Endothelial cell of umbilical vein (primary cell): ENCODE measurements at regions of chr11 and their contacts with region 1.

Region 1: GRCh38 chr11:13354335-13354734 is 76.7 kb downstream of the BMAL1 start:
- DNase-seq: peak; percentile 44
- H3K4me3 ChIP-seq: no peak overlapping the region
- H3K27ac ChIP-seq: no peak overlapping the region
- H3K4me1 ChIP-seq: no peaks in the 10 kb centered on the region
- H3K27me3 ChIP-seq: no peaks in the 10 kb centered on the region
- CTCF ChIP-seq: peak; percentile 45 to 46
- POLR2A ChIP-seq: no peak

Region 2: GRCh38 chr11:13269775-13270174 is 84.6 kb before region 1 on chr11:
- CTCF ChIA-PET with region 1: no interaction called
- POLR2A ChIA-PET with region 1: no interaction called
- dilution Hi-C with region 1: no loop called
- intact Hi-C with region 1: no loop called
- DNase-seq: no peak
- H3K4me3 ChIP-seq: no peak overlapping the region
- H3K27ac ChIP-seq: no peak overlapping the region
- H3K4me1 ChIP-seq: no peaks in the 10 kb centered on the region
- H3K27me3 ChIP-seq: peaks cover 26 to 37% of the 10 kb centered on the region in 2 experiments
- CTCF ChIP-seq: no peak
- POLR2A ChIP-seq: no peak

Region 3: DNA sequence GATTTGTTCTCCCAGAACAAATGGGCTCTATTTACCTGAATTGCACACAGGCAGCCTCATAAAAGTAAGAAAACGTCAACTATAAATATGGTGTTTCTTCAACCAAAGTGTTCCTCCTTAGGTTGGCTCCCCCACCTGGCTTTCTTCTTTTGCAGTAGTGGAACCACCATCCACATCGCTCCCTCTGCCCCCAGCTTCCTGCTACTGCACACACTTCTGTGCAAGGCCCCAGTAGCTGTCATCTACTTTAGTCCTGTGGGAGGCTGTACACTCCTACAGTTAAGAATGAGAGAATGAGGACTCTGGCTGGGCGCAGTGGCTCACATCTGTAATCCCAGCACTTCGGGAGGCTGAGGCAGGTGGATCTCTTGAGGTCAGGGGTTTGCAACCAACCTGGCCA is 12.8 kb after region 1 on chr11:
- CTCF ChIA-PET with region 1: interaction called, 18 read pairs
- POLR2A ChIA-PET with region 1: no interaction called
- dilution Hi-C with region 1: no loop called
- intact Hi-C with region 1: no loop called
- DNase-seq: no peak
- H3K4me3 ChIP-seq: no peak overlapping the region
- H3K27ac ChIP-seq: no peak overlapping the region
- H3K4me1 ChIP-seq: no peaks in the 10 kb centered on the region
- H3K27me3 ChIP-seq: no peaks in the 10 kb centered on the region
- CTCF ChIP-seq: no peak
- POLR2A ChIP-seq: no peak

Region 4: DNA sequence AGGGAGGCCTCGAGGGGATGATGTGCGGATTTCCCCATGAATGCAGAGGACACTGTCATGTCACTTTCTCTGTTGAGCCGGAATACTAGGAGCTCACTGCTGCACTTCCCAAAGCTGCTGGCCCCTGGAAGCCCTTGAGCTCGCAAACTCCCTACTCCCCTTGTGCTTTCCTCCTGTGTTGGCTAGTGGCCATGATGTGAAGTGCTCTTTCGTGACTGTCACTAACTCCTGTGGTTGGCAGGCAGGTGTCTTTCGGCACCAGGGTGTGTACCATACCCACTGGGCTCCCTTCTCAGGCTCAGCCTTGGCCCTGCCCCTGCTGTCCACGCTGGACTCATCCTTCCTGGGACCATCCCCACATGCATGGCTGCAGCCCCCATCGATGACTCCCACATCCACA is 22.5 kb after region 1 on chr11:
- CTCF ChIA-PET with region 1: interaction called, 25 read pairs
- POLR2A ChIA-PET with region 1: no interaction called
- dilution Hi-C with region 1: no loop called
- intact Hi-C with region 1: no loop called
- DNase-seq: no peak
- H3K4me3 ChIP-seq: no peak overlapping the region
- H3K27ac ChIP-seq: no peak overlapping the region
- H3K4me1 ChIP-seq: peaks cover 16% of the 10 kb centered on the region
- H3K27me3 ChIP-seq: no peaks in the 10 kb centered on the region
- CTCF ChIP-seq: no peak
- POLR2A ChIP-seq: no peak